Heart left ventricle (tissue), 16 donors: ENCODE measurements at regions of chr6 and their contacts with region 1.

Region 1: GRCh38 chr6:166775180-166776081 is 148.4 kb upstream of the RPS6KA2 start:
- DNase-seq: peak in 4 of 5 donors; percentile 47 to 64 (median 50)
- ATAC-seq: peak in 3 of 4 donors; percentile 53 to 67 (median 57)
- H3K4me3 ChIP-seq: no peak overlapping the region
- H3K27ac ChIP-seq: no peak overlapping the region
- H3K4me1 ChIP-seq: no peaks in the 10 kb centered on the region
- H3K27me3 ChIP-seq: peaks cover 0 to 14% (median 0%) of the 10 kb centered on the region in 9 donors
- CTCF ChIP-seq: peak; percentile 77 to 89 (median 81)
- POLR2A ChIP-seq: no peak

Region 2: DNA sequence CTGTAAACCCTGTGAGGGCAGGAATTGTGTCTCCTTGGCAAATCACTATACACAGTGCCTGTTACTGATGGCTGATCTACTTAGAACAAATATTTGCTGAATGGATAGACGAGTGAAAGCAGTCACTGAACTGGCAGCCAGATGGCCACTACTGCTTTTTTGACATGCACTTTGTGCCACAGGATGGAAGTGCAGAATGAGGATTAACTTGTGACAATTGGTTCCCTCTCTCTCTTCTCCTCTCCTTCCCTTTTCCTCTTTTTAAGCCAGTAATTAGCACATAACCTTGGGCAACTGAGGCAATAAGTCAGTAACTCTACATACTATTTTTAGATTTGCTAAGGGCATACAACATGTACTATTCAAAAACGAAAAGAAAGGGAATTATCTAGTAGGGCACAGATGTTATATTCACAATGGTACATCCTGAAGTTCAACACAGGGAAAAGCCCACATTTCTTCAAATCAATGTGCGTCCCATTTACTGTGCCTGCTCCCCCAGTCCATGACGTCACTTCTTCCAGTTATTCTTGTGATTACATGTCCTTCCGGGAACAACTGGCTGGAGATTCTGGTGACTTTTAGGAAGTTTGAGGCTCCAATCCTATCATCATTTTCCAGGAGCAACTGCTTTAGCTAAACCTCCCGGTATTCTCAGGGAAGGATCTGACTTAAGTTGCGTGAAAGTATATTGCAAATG is 131.4 kb before region 1 on chr6:
- intact Hi-C with region 1: no loop called
- DNase-seq: no peak
- ATAC-seq: peak in 1 of 4 donors; percentile 60
- H3K4me3 ChIP-seq: no peak overlapping the region
- H3K27ac ChIP-seq: peak overlapping the region in 4 of 12 donors; percentile 39 to 56 (median 43)
- H3K4me1 ChIP-seq: peaks cover 0 to 20% (median 14%) of the 10 kb centered on the region in 12 donors
- H3K27me3 ChIP-seq: no peaks in the 10 kb centered on the region
- CTCF ChIP-seq: no peak
- POLR2A ChIP-seq: no peak

Region 3: DNA sequence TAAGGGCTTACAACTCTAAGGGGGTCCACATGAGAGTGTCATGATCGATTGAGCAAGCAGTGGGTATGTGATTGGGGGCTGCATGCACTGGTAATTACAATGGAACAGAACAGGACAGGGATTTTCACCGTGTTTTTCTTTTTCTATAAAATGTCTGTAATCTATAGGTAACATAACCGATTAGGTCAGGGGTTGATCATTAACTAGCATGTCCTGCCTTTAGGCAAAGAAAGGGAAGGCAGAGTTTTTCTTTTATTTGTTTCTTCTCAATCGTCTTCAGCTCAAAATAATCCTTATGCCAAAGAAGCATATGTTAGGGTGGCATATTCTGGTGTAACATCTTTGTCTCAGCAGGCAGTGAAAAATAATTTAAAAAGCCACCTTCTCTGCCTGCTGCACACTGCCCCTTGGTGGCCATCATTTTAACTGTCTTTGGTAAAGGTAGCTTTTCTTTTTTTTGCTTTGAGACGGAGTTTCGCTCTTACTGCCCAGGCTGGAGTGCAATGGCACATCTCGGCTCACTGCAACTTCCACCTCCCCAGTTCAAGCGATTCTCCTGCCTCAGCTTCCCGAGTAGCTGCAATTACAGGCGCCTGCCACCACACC is 214.1 kb after region 1 on chr6:
- intact Hi-C with region 1: loop called in 6 of 10 experiments (anchors 1 to 10 kb)
- DNase-seq: peak in 1 of 5 donors; percentile 21
- ATAC-seq: peak in 2 of 4 donors; percentile 34 to 47
- H3K4me3 ChIP-seq: no peak overlapping the region
- H3K27ac ChIP-seq: no peak overlapping the region
- H3K4me1 ChIP-seq: no peaks in the 10 kb centered on the region
- H3K27me3 ChIP-seq: no peaks in the 10 kb centered on the region
- CTCF ChIP-seq: peak in 11 of 12 donors; percentile 28 to 69 (median 43)
- POLR2A ChIP-seq: no peak

Region 4: GRCh38 chr6:166999145-166999883 is 223.9 kb after region 1 on chr6 and contains the start of gene CEP43:
- intact Hi-C with region 1: loop called in 1 of 10 experiments (anchors 5 kb)
- DNase-seq: peak; percentile 96 to 97 (median 96)
- ATAC-seq: peak; percentile 98 to 99 (median 99)
- H3K4me3 ChIP-seq: peak within 1 kb of the TSS; percentile 64 to 99 (median 94)
- H3K27ac ChIP-seq: peak within 1 kb of the TSS in 11 of 12 donors; percentile 17 to 84 (median 74)
- H3K4me1 ChIP-seq: peaks cover 0 to 26% (median 14%) of the 10 kb centered on the region in 12 donors
- H3K27me3 ChIP-seq: no peaks in the 10 kb centered on the region
- CTCF ChIP-seq: peak in 6 of 12 donors; percentile 11 to 37 (median 20)
- POLR2A ChIP-seq: peak in 1 of 2 donors; percentile 39
- total RNA-seq, gene CEP43: 6.6 to 15.5 (median 10.7) TPM

Region 5: GRCh38 chr6:167141667-167142432 is 366.4 kb after region 1 on chr6:
- intact Hi-C with region 1: loop called in 7 of 10 experiments (anchors 1 to 5 kb)
- DNase-seq: peak in 4 of 5 donors; percentile 24 to 62 (median 48)
- ATAC-seq: peak; percentile 75 to 92 (median 87)
- H3K4me3 ChIP-seq: no peak overlapping the region
- H3K27ac ChIP-seq: no peak overlapping the region
- H3K4me1 ChIP-seq: no peaks in the 10 kb centered on the region
- H3K27me3 ChIP-seq: peaks cover 0 to 49% (median 11%) of the 10 kb centered on the region in 9 donors
- CTCF ChIP-seq: peak; percentile 56 to 80 (median 70)
- POLR2A ChIP-seq: no peak

Region 6: GRCh38 chr6:167298153-167298552 is 522.7 kb after region 1 on chr6:
- intact Hi-C with region 1: loop called in 1 of 10 experiments (anchors 10 kb)
- DNase-seq: no peak
- ATAC-seq: no peak
- H3K4me3 ChIP-seq: no peak overlapping the region
- H3K27ac ChIP-seq: no peak overlapping the region
- H3K4me1 ChIP-seq: no peaks in the 10 kb centered on the region
- H3K27me3 ChIP-seq: peaks cover 0 to 8% (median 0%) of the 10 kb centered on the region in 9 donors
- CTCF ChIP-seq: no peak
- POLR2A ChIP-seq: no peak